ENCODE measurements at regions of chr7 and their contacts with region 1.

Region 1: GRCh38 chr7:78996013-78996412 is 457.5 kb downstream of the MAGI2 start:
- DNase-seq: no peak
- H3K4me3 ChIP-seq: no peak overlapping the region
- CTCF ChIP-seq: no peak

Region 2: DNA sequence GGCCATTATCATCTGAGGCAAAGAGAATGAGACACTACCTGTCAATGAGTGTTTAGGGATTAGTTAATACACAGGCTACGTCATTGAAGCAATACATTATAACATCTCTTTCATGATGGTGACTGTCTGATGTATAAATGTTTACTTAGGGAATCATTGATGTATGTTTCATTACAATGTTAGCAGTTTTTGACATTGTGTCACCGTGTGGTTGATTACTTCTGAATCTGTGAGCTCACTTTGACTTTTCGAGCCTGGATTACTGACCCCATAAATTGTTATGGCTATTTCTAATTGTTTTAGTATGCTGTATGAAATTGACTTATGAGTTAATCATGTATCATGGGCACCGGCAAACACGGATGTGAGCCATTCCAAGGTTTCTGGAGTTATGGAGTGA is 36.5 kb before region 1 on chr7:
- in situ Hi-C with region 1: loop called (anchors 5 kb)
- DNase-seq: no peak
- H3K4me3 ChIP-seq: no peak overlapping the region
- CTCF ChIP-seq: no peak

Measured in astrocyte of the cerebellum (primary cell).